ENCODE measurements at regions of chr1 and their contacts with region 1.

Region 1: DNA sequence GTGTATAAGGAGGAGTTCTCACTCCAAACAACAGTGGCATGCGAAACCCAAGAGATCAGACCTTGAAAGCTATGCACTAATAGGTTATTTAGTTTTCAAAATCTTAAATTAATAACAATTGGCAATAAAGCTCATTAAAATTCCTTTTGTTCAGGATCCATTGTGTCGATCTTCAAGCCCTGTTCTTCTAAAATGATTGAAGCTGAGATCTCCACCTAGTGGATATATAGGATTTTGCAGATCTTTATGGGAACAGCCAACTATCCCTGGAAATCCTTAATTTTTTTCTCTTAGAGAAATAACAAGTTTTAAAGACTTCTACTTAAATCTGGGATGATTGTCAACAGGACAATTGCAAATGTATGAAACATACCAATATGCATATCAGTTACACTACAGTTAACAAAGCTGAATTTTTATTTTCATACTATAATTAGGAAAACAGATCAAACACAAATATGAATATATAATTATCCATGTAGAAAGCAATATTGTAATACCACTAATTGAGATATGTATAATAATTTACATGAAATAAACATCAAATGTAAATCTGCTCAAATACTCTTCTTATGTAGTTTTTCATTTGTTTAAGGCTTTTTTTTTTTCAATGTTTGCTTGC is 43.3 kb downstream of the LRRC53 start:
- DNase-seq: no peak
- ATAC-seq: no peak
- H3K4me3 Mint-ChIP-seq: no peak overlapping the region
- H3K27ac Mint-ChIP-seq: no peak overlapping the region
- H3K4me1 Mint-ChIP-seq: no peaks in the 10 kb centered on the region
- H3K27me3 Mint-ChIP-seq: peaks cover 3% of the 10 kb centered on the region
- CTCF ChIP-seq: no peak

Region 2: GRCh38 chr1:73839922-73840321 is 629.2 kb before region 1 on chr1:
- CTCF ChIA-PET with region 1: no interaction called
- POLR2A ChIA-PET with region 1: no interaction called
- intact Hi-C with region 1: loop called (anchors 10 kb)
- DNase-seq: no peak
- ATAC-seq: no peak
- H3K4me3 Mint-ChIP-seq: no peak overlapping the region
- H3K27ac Mint-ChIP-seq: no peak overlapping the region
- H3K4me1 Mint-ChIP-seq: no peaks in the 10 kb centered on the region
- H3K27me3 Mint-ChIP-seq: no peaks in the 10 kb centered on the region
- CTCF ChIP-seq: no peak

Region 3: DNA sequence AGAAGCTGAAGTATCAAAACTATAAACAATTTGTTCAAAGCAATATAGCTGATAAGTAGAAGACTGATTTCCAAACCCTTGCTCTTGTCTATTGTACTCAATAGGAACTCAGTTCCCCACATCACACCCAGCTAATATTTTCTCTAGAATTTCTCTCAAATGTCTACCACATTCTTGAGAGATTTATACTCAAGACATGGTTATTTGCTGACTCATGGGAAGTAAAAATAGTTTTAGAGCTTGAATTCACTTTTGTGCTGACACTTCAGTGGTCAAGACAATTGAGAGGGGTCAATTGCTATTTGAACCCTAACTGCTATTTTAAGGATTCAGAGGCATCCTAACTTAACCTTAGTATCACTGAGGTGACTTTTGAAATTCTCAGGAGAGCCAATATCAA is 134.9 kb before region 1 on chr1:
- CTCF ChIA-PET with region 1: no interaction called
- POLR2A ChIA-PET with region 1: no interaction called
- intact Hi-C with region 1: no loop called
- DNase-seq: no peak
- ATAC-seq: no peak
- H3K4me3 Mint-ChIP-seq: no peak overlapping the region
- H3K27ac Mint-ChIP-seq: no peak overlapping the region
- H3K4me1 Mint-ChIP-seq: no peaks in the 10 kb centered on the region
- H3K27me3 Mint-ChIP-seq: no peaks in the 10 kb centered on the region
- CTCF ChIP-seq: no peak

Region 4: GRCh38 chr1:74430342-74430934 is 38.7 kb before region 1 on chr1:
- CTCF ChIA-PET with region 1: no interaction called
- POLR2A ChIA-PET with region 1: no interaction called
- intact Hi-C with region 1: no loop called
- DNase-seq: no peak
- ATAC-seq: no peak
- H3K4me3 Mint-ChIP-seq: no peak overlapping the region
- H3K27ac Mint-ChIP-seq: no peak overlapping the region
- H3K4me1 Mint-ChIP-seq: no peaks in the 10 kb centered on the region
- H3K27me3 Mint-ChIP-seq: no peaks in the 10 kb centered on the region
- CTCF ChIP-seq: no peak

Measured in activated B cell treated with CpG ODN at 0.5 μM for 24 hours (primary cell).